HEK293T (cell line): ENCODE measurements at regions of chr18 and their contacts with region 1.

Region 1: GRCh38 chr18:21489119-21489750 is 111.3 kb downstream of the ESCO1 start:
- DNase-seq: peak; percentile 80

Region 2: GRCh38 chr18:21502661-21503060 is 13.4 kb after region 1 on chr18:
- CTCF ChIA-PET with region 1: interaction called, 11 read pairs
- POLR2A ChIA-PET with region 1: no interaction called
- DNase-seq: no peak